Mammary epithelial cell (primary cell): ENCODE measurements at regions of chr22 and their contacts with region 1.

Region 1: DNA sequence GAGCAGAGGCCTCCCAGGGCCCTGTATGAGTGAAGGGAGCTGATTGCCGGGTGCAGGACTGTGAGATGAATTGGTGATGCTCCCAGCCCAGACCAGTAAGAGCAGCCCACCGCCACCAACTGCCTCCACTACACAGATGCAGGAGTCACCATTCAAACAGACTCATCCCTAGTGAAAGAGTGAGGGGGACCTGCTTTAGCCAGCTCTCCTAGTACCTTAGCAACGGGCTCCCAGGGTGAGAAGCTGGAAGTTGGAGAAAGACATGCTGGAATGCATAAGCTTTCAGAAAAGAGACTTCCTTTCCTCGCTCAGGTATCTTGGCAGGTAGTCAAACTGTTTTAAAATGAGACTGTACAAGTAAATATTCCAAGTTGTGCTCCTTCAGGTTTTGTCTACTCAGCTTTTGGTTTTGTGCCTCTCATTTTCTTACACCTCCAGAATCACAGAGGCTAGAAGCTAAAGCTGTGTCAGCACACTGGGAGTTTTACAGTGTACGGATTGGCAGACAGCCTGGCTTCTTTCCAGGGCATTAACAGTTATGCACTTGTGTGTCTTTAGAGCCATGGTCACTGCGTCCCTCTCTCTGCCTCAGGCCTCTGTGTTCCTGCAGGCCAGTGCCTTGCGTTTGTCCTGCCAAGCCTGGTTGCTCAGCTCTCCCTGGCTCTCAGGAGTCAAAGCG is 146.2 kb downstream of the ATXN10 start:
- DNase-seq: no peak
- H3K4me3 ChIP-seq: no peak overlapping the region
- H3K27ac ChIP-seq: no peak overlapping the region
- H3K4me1 ChIP-seq: no peaks in the 10 kb centered on the region
- H3K27me3 ChIP-seq: no peaks in the 10 kb centered on the region
- CTCF ChIP-seq: no peak

Region 2: DNA sequence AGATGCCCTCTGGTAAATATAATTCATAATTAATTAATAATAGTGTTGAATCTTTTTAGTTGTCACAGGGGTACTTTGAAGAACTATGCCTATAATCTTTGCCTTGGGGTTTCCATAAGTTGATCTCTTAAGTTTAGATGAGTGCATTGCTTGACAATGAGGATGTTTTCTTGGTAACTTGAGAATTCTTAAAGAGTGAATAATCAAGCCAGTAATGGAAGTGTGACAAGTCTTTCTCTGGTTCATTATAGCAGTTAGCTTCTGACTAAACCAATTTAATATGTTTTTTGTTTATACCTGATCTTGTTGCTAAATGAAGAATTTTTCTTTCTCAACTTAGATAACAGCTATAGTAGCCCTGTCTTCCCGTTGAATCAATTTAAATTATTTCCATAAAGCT is 100.1 kb before region 1 on chr22:
- CTCF ChIA-PET with region 1: no interaction called
- dilution Hi-C with region 1: loop called (anchors 5 kb)
- in situ Hi-C with region 1: no loop called
- intact Hi-C with region 1: no loop called
- DNase-seq: peak; percentile 64
- H3K4me3 ChIP-seq: no peak overlapping the region
- H3K27ac ChIP-seq: peak overlapping the region; percentile 46
- H3K4me1 ChIP-seq: peaks cover 7% of the 10 kb centered on the region
- H3K27me3 ChIP-seq: no peaks in the 10 kb centered on the region
- CTCF ChIP-seq: no peak

Region 3: DNA sequence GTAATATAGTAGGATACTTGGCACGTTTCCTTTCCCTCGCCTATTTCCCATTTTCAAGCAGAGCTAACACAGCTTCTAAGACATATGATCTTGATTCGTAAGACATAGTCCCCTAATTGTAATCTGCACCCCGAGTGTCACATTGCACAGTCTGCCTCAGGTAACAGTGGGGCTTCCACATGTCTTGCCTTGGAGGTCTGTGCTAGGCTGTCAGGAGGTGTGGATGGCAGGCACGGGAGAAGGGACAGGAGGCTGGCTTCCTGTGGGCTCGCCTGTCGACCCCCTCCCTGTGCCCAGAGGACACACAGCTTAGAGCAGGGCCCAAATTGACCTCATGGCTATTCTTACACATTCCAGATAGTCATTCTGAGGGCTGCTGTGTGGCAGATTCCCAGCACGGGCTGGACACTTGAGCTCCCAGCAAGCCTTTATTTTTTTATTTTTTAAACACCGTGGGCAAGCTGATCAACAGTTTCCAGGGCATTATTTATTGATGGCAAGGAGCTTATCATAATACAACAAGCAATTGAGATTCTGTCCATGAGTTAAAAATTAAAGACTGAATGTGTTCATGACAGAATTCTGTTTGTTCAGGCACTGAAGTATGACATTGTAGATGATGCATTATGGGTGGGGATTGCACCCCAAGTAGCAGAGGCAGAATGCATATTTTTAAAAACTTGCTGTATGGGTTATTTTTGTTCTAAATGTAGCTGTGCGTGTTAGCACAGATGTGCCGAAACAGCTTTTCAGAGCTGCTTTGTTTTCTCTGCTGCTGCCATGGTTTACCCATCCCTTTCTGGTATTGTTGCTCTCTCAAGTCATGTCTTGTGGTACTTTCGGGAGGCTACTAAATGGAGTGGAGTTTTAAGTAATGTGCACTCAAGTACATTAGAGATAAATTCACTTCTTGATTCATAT is 33.3 kb before region 1 on chr22:
- CTCF ChIA-PET with region 1: no interaction called
- dilution Hi-C with region 1: loop called (anchors 5 kb)
- in situ Hi-C with region 1: no loop called
- intact Hi-C with region 1: no loop called
- DNase-seq: no peak
- H3K4me3 ChIP-seq: no peak overlapping the region
- H3K27ac ChIP-seq: no peak overlapping the region
- H3K4me1 ChIP-seq: peaks cover 4% of the 10 kb centered on the region
- H3K27me3 ChIP-seq: no peaks in the 10 kb centered on the region
- CTCF ChIP-seq: no peak